Ascending aorta (tissue), 2 donors: ENCODE measurements at regions of chr14 and their contacts with region 1.

Region 1: DNA sequence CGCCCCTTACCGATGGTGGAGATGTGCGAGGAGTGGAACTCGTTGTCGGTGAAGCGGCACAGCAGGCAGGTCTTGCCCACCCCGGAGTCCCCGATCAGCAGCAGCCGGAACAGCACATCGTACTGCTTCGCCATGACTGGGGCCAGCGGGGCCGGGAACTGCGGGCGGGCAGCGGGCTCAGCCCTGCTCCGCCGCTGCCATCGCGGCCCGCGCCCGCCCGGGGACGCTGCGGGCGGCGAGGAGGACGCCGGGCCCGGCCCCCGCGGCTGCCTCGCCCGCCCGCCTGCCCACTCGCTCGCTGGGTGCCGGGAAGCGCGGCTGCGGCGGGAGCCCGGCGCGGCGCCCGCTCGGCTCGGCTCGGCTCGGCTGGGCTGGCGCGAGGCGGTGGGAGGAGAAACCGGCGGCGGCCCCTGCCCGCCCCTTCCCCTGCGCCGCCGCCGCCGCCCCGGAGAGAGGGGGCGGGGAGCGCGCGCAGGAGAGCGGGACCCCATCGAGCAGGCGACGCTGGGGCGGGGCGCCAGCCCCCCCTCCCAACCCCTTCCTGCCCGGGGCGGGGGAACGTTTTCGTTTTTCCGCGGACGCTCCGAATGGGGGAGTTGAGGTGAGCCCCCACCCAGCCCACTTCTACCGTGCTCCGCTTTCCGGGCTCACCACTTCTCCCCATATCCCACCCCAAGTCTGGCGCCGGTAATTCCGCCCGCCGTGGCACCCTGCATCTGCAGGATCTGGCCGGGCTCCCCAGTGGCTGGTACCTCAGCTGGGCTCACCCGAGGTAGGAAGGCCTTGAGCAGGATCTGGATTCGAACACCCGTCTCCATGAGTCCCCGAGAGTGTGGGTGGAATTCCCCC is at the start of gene RAB15:
- DNase-seq: no peak
- H3K4me3 ChIP-seq: peak within 1 kb of the TSS; percentile 69 to 77
- H3K27ac ChIP-seq: peak within 1 kb of the TSS in 1 of 2 donors; percentile 32
- H3K4me1 ChIP-seq: peaks cover 9 to 12% of the 10 kb centered on the region in 2 donors
- H3K27me3 ChIP-seq: no peaks in the 10 kb centered on the region
- CTCF ChIP-seq: no peak
- total RNA-seq, gene RAB15: 1.6 TPM

Region 2: GRCh38 chr14:64919622-64920021 is 52.5 kb before region 1 on chr14:
- intact Hi-C with region 1: loop called (anchors 5 kb)
- DNase-seq: peak in 1 of 2 donors; percentile 80
- H3K4me3 ChIP-seq: no peak overlapping the region
- H3K27ac ChIP-seq: peak overlapping the region; percentile 62 to 76
- H3K4me1 ChIP-seq: peaks cover 3 to 33% of the 10 kb centered on the region in 2 donors
- H3K27me3 ChIP-seq: no peaks in the 10 kb centered on the region
- CTCF ChIP-seq: no peak

Region 3: DNA sequence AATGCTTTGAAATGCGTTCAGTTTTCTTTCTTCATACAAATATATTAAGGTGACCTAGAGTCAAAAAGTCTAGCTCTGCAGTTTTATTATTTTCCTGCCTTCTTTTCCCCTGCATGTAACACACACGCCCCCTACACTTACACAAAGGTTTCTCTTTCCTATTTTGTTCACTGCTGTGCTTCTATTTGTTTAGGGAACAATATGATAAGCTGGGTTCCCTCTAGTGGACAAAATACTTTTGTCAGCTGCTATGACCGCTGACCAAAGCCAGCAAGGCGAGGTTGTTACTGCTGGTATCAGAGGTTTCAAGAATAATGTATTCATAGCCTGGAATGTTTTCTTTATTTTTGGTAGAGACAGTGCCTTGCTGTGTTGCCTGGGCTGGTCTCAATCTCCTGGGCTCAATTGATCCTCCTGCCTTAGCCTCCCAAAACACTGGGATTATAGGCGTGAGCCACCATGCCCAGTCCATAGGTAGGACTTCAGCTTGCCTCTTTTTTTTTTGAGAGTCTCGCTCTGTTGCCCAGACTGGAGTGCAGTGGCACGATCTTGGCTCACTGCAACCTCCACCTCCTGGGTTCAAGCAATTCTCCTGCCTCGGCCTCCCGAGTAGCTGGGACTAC is 47.9 kb after region 1 on chr14:
- intact Hi-C with region 1: no loop called
- DNase-seq: no peak
- H3K4me3 ChIP-seq: no peak overlapping the region
- H3K27ac ChIP-seq: no peak overlapping the region
- H3K4me1 ChIP-seq: no peaks in the 10 kb centered on the region
- H3K27me3 ChIP-seq: no peaks in the 10 kb centered on the region
- CTCF ChIP-seq: peak; percentile 29 to 60 (median 45)